ENCODE measurements at regions of chr2 and their contacts with region 1.

Region 1: GRCh38 chr2:29202819-29203495 is 87.7 kb downstream of the CLIP4 start:
- DNase-seq: no peak
- H3K4me3 ChIP-seq: no peak overlapping the region
- H3K27ac ChIP-seq: no peak overlapping the region
- H3K4me1 ChIP-seq: no peaks in the 10 kb centered on the region
- H3K27me3 ChIP-seq: no peaks in the 10 kb centered on the region
- CTCF ChIP-seq: no peak
- EP300 ChIP-seq: no peak
- POLR2A ChIP-seq: no peak

Region 2: GRCh38 chr2:29187926-29188325 is 15.0 kb before region 1 on chr2:
- intact Hi-C with region 1: no loop called
- DNase-seq: no peak
- H3K4me3 ChIP-seq: no peak overlapping the region
- H3K27ac ChIP-seq: no peak overlapping the region
- H3K4me1 ChIP-seq: no peaks in the 10 kb centered on the region
- H3K27me3 ChIP-seq: no peaks in the 10 kb centered on the region
- CTCF ChIP-seq: no peak
- EP300 ChIP-seq: no peak
- POLR2A ChIP-seq: no peak

Region 3: GRCh38 chr2:29215739-29216608 is 13.0 kb after region 1 on chr2:
- intact Hi-C with region 1: loop called (anchors 1 kb)
- DNase-seq: no peak
- H3K4me3 ChIP-seq: no peak overlapping the region
- H3K27ac ChIP-seq: no peak overlapping the region
- H3K4me1 ChIP-seq: no peaks in the 10 kb centered on the region
- H3K27me3 ChIP-seq: peaks cover 0 to 6% (median 0%) of the 10 kb centered on the region in 4 donors
- CTCF ChIP-seq: no peak
- EP300 ChIP-seq: no peak
- POLR2A ChIP-seq: no peak

Region 4: GRCh38 chr2:29810956-29811355 is 608.0 kb after region 1 on chr2:
- intact Hi-C with region 1: no loop called
- DNase-seq: no peak
- H3K4me3 ChIP-seq: no peak overlapping the region
- H3K27ac ChIP-seq: no peak overlapping the region
- H3K4me1 ChIP-seq: peaks cover 0 to 4% (median 2%) of the 10 kb centered on the region in 4 donors
- H3K27me3 ChIP-seq: no peaks in the 10 kb centered on the region
- CTCF ChIP-seq: no peak
- EP300 ChIP-seq: no peak
- POLR2A ChIP-seq: no peak

Measured in esophagus muscularis mucosa (tissue), 4 donors.